ENCODE measurements at regions of chr3 and their contacts with region 1.

Region 1: DNA sequence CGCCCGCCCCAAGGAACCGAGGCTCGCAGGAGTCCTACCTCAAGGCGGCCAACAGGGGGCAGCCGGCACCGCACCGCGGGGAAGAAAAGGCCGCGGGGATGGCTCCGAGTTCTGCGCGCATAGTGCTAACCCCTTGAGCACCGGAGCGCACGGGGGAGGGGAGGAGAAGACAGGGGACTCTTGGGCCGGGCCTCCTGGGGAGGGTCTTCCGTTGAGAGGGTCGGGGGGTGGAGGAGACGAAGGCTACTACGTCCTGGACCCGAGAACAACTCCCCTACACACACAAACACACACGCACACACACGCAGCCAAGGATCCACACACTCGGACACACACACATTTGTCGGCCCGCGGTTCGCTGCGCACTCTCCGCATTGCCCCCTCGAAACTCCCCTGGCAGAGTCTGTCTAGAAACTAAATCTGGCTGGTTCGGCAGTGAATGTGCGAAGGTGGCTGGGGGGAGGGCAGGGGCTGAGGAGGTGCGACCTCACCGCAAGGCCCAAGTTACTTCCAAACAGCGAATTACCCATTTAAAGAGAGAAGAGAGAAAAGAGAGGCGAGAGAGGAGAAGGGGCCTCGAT is 1.8 kb downstream of the WNT5A start:
- DNase-seq: no peak
- H3K4me3 Mint-ChIP-seq: no peak overlapping the region
- H3K27ac Mint-ChIP-seq: peak overlapping the region; percentile 43
- H3K4me1 Mint-ChIP-seq: peaks cover 17% of the 10 kb centered on the region
- H3K27me3 Mint-ChIP-seq: peaks cover 81% of the 10 kb centered on the region

Region 2: DNA sequence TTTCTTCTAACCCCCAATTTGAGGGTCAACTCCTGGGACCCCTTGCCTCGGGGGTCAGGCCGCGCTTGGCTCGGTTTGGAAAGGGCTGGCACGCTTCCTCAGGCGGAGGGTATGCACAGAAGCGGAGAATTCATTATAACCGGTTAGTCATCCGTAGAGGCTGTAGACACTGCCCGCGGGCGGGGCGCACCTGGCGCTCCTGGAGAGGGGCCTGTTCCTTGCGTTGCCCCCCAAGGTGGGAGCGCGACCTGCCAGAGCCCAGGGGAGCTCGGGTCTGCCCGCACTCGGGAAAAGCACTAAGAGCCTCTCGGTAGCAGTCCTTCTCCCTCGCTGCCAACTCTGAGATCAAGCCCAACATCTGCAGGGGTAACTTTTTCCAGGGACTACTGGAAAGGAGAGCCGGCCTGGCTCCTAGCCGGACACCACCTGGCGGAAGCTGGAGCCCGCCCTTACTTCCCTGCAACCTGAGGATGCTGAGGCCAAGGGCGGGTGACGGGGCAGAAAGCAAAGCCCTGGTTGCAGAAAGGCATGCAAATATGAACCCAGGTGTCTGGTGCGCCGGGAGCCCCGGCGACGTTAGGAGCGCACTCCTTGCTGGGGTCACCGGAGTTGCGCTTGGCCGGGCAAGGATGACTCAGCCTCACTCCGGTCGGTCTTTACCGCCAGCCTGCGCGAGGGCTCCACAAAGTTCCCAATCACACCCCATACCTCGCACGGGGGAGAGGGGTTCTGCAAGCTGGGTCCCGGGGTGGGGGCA is 1364.5 kb before region 1 on chr3:
- intact Hi-C with region 1: loop called (anchors 5 kb)
- DNase-seq: no peak
- H3K4me3 Mint-ChIP-seq: no peak overlapping the region
- H3K27ac Mint-ChIP-seq: no peak overlapping the region
- H3K4me1 Mint-ChIP-seq: peaks cover 3% of the 10 kb centered on the region
- H3K27me3 Mint-ChIP-seq: peaks cover 43% of the 10 kb centered on the region

Region 3: GRCh38 chr3:56251343-56251945 is 766.1 kb after region 1 on chr3:
- intact Hi-C with region 1: loop called (anchors 2 kb)
- DNase-seq: no peak
- H3K4me3 Mint-ChIP-seq: no peak overlapping the region
- H3K27ac Mint-ChIP-seq: no peak overlapping the region
- H3K4me1 Mint-ChIP-seq: no peaks in the 10 kb centered on the region
- H3K27me3 Mint-ChIP-seq: peaks cover 5% of the 10 kb centered on the region

Region 4: DNA sequence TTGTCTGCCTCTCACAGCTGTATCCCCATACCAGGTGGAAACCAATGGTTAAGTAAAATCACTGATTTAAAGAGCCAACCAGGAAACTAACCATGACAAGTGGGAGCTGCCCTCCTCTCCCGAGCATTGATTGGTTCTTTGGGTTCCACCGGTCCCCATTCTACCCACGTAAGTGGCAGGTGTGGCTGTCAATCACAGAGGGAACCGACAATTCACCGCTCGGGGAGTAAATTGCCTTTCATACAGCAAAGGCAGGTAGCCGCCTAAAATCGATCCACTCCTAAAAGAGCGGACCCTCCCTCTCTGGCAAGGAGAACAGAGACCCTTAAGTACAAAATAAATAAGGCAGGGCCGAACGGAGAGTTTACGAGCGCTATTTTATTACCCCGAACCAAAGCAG is 981.8 kb after region 1 on chr3:
- intact Hi-C with region 1: loop called (anchors 10 kb)
- DNase-seq: peak; percentile 15
- H3K4me3 Mint-ChIP-seq: peak overlapping the region; percentile 71
- H3K27ac Mint-ChIP-seq: no peak overlapping the region
- H3K4me1 Mint-ChIP-seq: peaks cover 2% of the 10 kb centered on the region
- H3K27me3 Mint-ChIP-seq: peaks cover 60% of the 10 kb centered on the region

Measured in activated T-helper 2 cell treated with anti-CD3 and anti-CD28 coated beads, Interferon-gamma antibody, Interleukin-2, Interleukin-4, amounts not matched to agents 10 μg/mL and 5 μg/mL and 100 μg/mL, durations not matched to agents 14 hours and 24 hours and 36 hours (primary cell).